GM10248 (cell line): ENCODE measurements at regions of chr17 and their contacts with region 1.

Region 1: DNA sequence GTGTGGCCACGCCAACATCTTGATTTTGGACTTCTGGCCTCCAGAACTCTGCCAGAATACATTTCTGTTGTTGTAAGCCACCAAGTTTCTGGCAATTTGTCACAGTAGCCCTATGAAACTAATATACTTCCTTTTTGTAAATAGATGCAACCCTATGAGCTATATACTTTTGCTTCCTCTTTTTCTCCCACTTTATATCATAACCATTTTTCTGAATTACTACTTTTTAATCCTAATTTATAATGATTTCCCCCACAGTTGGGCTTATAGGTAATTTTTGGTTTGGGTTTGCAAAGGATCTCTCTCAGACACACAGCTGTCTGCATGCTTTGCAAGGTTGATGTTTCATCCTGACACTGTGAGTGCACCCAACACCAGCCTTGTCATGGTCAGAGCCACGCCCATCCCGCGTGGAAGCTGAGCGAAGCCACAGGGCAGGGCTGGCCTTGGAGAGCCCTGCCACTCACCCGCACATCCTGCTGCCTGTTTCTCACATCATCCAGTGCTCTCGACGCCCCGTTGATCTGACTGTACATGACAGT is 5.8 kb downstream of the TRIM25 start:
- DNase-seq: peak; percentile 71
- CTCF ChIP-seq: no peak

Region 2: GRCh38 chr17:56891784-56892183 is 16.3 kb before region 1 on chr17:
- CTCF ChIA-PET with region 1: interaction called, 20 read pairs
- POLR2A ChIA-PET with region 1: interaction called, 6 read pairs
- DNase-seq: no peak
- CTCF ChIP-seq: no peak

Region 3: DNA sequence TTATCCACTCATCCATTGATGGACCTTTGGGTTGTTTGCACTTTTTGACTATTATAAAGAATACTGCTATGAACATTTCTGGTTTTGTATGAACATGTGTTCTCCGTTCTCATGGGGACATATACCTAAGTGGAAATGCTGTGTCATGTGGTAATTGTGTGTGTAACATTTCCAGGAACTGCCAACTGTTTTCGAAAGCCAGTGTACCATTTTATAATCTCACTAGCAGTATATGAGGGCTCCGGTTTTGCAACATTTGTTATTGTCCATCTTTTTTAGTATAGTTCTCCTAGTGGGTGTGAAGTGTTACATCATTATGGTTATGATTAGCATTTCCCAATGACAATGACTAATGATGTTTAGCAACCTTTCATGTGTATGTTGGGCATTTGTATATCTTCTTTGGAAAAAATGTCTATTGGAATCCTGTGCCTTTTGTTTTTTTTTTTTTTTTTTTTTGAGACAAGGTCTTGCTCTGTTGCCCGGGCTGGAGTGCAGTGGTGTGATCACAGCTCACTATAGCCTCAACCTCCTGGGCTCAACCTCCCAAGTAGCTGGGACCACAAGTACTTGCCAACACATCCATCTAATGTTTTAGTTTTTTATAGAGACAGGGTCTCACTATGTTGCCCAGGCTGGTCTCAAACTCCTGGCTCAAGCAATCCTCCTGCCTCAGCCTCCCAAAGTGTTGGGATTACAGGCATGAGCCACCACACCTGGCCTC is 11.0 kb after region 1 on chr17:
- CTCF ChIA-PET with region 1: no interaction called
- POLR2A ChIA-PET with region 1: no interaction called
- DNase-seq: no peak
- CTCF ChIP-seq: no peak

Region 4: DNA sequence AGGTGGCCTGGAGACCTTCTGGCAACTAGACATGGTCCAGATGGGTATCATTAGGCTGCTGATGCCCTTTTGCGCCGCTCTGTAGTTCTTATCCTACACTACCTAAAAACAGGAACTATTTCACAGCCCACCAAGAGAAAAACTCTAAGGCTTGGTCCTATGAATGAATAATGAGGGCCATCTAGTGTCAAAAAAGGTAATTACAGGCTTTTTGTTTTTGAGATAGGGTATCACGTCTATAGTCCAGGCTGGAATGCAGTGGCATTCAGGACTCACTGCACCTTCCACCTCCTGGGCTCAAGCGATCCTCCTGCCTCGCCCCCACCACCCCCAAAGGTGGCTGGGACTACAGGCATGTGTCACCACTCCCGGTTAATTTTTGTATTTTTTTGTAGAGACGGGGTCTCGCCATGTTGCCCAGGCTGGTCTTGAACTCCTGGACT is 31.9 kb after region 1 on chr17:
- CTCF ChIA-PET with region 1: interaction called, 10 read pairs
- POLR2A ChIA-PET with region 1: no interaction called
- DNase-seq: peak; percentile 70
- CTCF ChIP-seq: peak; percentile 59

Region 5: DNA sequence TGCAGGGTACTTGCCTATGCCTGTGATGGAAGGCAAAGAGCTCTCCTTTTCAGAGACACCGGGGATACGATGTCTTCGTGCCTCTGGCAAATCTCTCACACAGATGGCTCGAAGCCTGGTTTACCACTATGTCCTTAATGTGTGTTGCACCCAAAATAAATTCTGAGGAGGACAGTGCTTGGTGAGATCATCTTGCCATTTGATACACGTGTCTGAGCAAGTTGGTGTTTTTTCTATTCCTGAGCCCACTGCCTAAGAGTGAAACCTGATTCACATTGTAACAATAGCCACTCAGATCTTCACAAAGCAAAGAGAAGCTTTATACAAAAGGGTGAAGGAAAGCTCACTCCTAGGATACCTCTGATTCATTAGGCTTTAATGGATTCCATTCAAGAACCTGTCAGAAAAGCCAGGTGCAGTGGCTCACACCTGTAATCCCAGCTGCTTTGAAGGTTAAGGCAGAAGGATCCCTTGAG is 143.9 kb after region 1 on chr17:
- CTCF ChIA-PET with region 1: no interaction called
- POLR2A ChIA-PET with region 1: no interaction called
- DNase-seq: no peak
- CTCF ChIP-seq: no peak